K562 (cell line): ENCODE measurements at regions of chr6 and their contacts with region 1.

Region 1: GRCh38 chr6:28769626-28770402 is 154.0 kb downstream of the TRIM27 start:
- DNase-seq: peak; percentile 60 to 87 (median 66)
- ATAC-seq: peak; percentile 82
- H3K4me3 ChIP-seq: no peak overlapping the region
- H3K27ac ChIP-seq: no peak overlapping the region
- H3K4me1 ChIP-seq: peaks cover 24 to 32% of the 10 kb centered on the region in 2 experiments; a peak in 4 of 5 replicates
- H3K27me3 ChIP-seq: no peaks in the 10 kb centered on the region
- CTCF ChIP-seq: peak; percentile 72 to 80 (median 78)
- EP300 ChIP-seq: no peak
- POLR2A ChIP-seq: no peak
- RAD21 ChIP-seq: peak; percentile 88 to 92

Region 2: DNA sequence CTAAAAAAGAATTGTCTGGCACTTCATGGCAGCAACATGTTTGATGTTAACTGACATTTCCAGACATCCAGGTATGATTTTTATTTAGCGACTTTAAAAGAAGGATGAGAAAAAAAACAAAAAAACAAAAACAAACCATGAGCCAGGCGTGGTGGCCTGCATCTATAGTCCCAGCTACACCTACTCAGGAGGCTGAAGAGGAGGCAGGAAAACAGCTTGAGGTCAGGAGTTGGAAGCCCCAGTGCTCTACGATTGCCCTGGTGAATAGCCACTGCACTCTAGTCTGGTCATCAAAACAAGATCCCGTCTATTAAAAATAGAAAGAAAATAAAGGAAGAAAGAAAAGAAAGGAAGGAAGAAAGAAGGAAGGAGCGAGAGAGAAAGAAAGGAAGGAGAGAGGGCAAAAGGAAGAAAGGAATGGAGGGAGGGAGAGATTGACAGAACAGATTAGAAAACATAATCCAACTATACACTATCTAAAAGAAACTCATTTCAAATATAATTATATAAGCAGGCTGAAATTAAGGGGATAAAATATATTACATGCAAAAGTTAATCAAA is 12.4 kb after region 1 on chr6:
- CTCF ChIA-PET with region 1: no interaction called
- POLR2A ChIA-PET with region 1: interaction called, 12 read pairs
- in situ Hi-C with region 1: no loop called
- intact Hi-C with region 1: no loop called
- DNase-seq: peak in 2 of 4 experiments; percentile 7 to 44
- ATAC-seq: peak; percentile 77
- H3K4me3 ChIP-seq: peak overlapping the region; percentile 3; the same call in 1 of the 2 replicates
- H3K27ac ChIP-seq: peak overlapping the region; percentile 62
- H3K4me1 ChIP-seq: peaks cover 11 to 14% of the 10 kb centered on the region in 2 experiments
- H3K27me3 ChIP-seq: no peaks in the 10 kb centered on the region
- CTCF ChIP-seq: no peak
- EP300 ChIP-seq: no peak
- POLR2A ChIP-seq: no peak
- RAD21 ChIP-seq: no peak

Region 3: DNA sequence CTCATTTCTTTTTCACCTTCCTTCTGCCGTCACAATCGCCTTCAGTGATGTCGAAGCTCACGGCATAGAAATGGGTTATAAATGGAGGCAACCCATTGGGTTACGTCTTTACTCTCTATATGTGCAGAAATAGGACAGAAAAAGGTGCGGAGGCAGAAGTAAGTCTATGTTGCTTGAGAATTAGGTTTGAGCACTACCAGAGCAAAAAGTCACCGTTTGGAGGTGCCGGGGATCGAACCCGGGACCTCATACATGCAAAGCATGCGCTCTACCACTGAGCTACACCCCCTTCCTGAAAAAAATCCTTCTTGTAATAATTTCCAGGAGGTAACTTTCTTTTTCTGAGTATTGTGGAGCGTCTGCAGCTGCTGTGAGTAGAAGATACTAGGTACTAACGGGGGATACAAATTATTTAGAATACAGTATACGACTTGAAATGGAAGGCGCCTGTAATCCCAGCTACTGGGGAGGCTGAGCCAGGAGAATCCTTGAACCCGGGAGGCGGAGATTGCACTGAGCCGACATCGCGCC is 19.8 kb after region 1 on chr6:
- CTCF ChIA-PET with region 1: no interaction called
- POLR2A ChIA-PET with region 1: interaction called, 7 read pairs
- in situ Hi-C with region 1: no loop called
- intact Hi-C with region 1: loop called (anchors 1 kb)
- DNase-seq: peak; percentile 62 to 91 (median 63)
- ATAC-seq: peak; percentile 78
- H3K4me3 ChIP-seq: peak overlapping the region; percentile 66
- H3K27ac ChIP-seq: peak overlapping the region; percentile 83
- H3K4me1 ChIP-seq: peaks cover 9 to 10% of the 10 kb centered on the region in 2 experiments; a peak in 4 of 5 replicates
- H3K27me3 ChIP-seq: no peaks in the 10 kb centered on the region
- CTCF ChIP-seq: no peak
- EP300 ChIP-seq: peak; percentile 65
- POLR2A ChIP-seq: no peak
- RAD21 ChIP-seq: peak in 1 of 2 experiments; percentile 21; a peak in 2 of 4 replicates

Region 4: GRCh38 chr6:28807682-28808280 is 38.0 kb after region 1 on chr6:
- CTCF ChIA-PET with region 1: interaction called, 3 read pairs
- POLR2A ChIA-PET with region 1: interaction called, 8 read pairs
- in situ Hi-C with region 1: no loop called
- intact Hi-C with region 1: loop called (anchors 1 kb)
- DNase-seq: peak; percentile 63 to 95 (median 70)
- ATAC-seq: peak; percentile 49
- H3K4me3 ChIP-seq: peak overlapping the region; percentile 52
- H3K27ac ChIP-seq: peak overlapping the region; percentile 25
- H3K4me1 ChIP-seq: peaks cover 11 to 12% of the 10 kb centered on the region in 2 experiments; a peak in 4 of 5 replicates
- H3K27me3 ChIP-seq: no peaks in the 10 kb centered on the region
- CTCF ChIP-seq: no peak
- EP300 ChIP-seq: peak; percentile 79
- POLR2A ChIP-seq: no peak
- RAD21 ChIP-seq: no peak; a peak in 1 of 4 replicates

Region 5: GRCh38 chr6:29016559-29017427 is 247.0 kb after region 1 on chr6:
- CTCF ChIA-PET with region 1: interaction called, 7 read pairs
- POLR2A ChIA-PET with region 1: no interaction called
- in situ Hi-C with region 1: no loop called
- intact Hi-C with region 1: loop called (anchors 1 kb)
- DNase-seq: peak; percentile 73 to 96 (median 78)
- ATAC-seq: peak; percentile 96
- H3K4me3 ChIP-seq: peak overlapping the region; percentile 56
- H3K27ac ChIP-seq: peak overlapping the region; percentile 69
- H3K4me1 ChIP-seq: peaks cover 3 to 7% of the 10 kb centered on the region in 2 experiments; a peak in 3 of 5 replicates
- H3K27me3 ChIP-seq: no peaks in the 10 kb centered on the region
- CTCF ChIP-seq: peak; percentile 90 to 93 (median 93)
- EP300 ChIP-seq: no peak
- POLR2A ChIP-seq: no peak
- RAD21 ChIP-seq: peak; percentile 88 to 93